ENCODE measurements at regions of chr16 and their contacts with region 1.

Region 1: DNA sequence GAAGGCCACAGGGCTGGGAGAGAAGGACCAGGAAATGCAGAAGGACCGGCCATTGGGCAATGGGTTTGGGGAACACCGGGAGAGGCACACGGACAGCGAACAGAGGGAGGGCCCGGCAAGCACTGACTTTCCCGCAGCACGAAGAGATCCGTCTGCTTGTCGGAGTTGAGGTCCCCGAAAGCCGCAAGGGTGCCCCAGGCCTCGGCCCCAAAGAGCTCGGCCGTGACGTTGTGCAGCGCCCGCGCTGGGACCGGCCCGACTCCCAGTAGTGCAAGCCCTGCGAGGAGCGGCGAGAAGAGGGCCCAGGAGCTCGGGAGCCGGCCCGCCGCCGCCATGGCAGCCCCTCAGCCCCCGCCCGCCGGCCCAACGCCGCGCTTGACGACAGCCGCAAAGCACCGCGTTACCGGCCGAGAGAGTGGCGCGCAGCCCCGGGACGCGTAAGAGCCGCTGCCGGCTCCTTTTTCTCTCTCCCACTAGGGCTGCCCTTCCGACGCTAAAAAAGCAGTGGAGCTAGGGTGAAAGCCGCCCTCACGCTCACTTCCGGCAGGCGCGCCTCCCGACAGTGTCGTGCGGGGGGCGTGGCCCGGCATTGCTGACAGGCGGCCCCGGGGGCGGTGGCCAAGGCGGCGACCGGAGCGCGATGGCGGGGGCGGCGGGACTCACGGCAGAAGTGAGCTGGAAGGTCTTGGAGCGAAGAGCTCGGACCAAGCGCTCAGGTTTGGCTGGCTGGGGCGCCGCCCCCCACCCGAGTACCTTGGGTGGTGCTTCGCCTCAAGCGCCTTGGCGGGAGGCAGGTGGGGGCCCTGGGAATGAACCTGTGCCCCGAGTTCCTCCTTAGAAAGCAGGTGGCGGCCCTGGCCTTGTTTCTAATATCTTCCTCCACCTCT is at the starts of genes ITFG1 and PHKB:
- DNase-seq: peak; percentile 89 to 98 (median 94)
- ATAC-seq: peak; percentile 96
- H3K4me3 ChIP-seq: peak within 1 kb of the TSS; percentile 79
- H3K4me3 Mint-ChIP-seq: peak within 1 kb of the TSS; percentile 89
- H3K27ac ChIP-seq: peak within 1 kb of the TSS; percentile 87 to 93
- H3K27ac Mint-ChIP-seq: peak within 1 kb of the TSS; percentile 87
- H3K4me1 ChIP-seq: peaks cover 26% of the 10 kb centered on the region
- H3K4me1 Mint-ChIP-seq: peaks cover 70% of the 10 kb centered on the region
- H3K27me3 ChIP-seq: no peaks in the 10 kb centered on the region
- H3K27me3 Mint-ChIP-seq: no peaks in the 10 kb centered on the region
- CTCF ChIP-seq: no peak
- total RNA-seq, gene ITFG1: 18.0 to 18.5 TPM
- total RNA-seq, gene PHKB: 28.8 to 31.3 TPM

Region 2: DNA sequence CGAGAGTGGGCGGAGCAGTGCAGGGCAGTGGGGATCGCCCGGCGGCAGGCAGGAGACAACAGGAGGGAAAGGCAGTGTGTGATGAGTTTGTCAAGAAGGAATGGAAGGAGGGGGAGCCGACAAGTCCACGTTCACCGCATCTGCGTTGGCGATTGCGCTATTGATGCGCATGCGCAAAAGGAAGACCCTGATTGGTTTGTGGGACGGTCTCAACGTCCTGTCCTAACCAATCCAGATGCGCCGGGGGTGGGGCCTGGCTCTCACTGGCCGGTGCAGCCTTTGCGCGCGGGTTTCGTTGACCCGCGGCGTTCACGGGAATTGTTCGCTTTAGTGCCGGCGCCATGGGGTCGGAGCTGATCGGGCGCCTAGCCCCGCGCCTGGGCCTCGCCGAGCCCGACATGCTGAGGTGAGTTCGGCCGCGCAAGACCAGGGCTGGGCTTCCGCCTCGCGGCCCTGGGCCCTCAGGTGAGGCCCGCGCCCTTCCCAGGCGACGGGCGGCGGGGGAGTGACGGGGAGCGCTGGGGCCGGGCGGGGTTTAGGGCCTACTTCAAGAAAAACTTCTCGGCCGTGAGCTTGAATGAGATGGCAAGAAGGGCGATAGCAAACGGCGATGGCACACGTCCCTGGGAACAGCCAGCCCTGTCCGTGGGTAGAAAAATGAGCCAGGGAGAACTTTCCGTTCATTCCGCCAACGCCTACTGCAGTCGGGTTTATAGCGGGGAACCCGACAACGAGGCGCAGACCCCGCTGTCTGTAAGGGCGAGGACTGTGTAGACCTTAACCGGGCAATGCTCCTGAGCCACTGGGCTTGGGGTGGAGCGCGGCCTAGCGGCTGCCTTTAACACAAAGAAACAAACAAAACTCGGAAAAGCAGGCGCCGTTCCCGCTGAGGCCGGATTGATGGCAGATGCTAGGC is 771.3 kb before region 1 on chr16 and contains the start of gene ORC6:
- CTCF ChIA-PET with region 1: no interaction called
- POLR2A ChIA-PET with region 1: no interaction called
- intact Hi-C with region 1: loop called (anchors 5 to 10 kb)
- DNase-seq: peak; percentile 92 to 97 (median 96)
- ATAC-seq: peak; percentile 72
- H3K4me3 ChIP-seq: peak within 1 kb of the TSS; percentile 94
- H3K4me3 Mint-ChIP-seq: no peak within 1 kb of the TSS
- H3K27ac ChIP-seq: peak within 1 kb of the TSS; percentile 91 to 98
- H3K27ac Mint-ChIP-seq: no peak within 1 kb of the TSS
- H3K4me1 ChIP-seq: peaks cover 23% of the 10 kb centered on the region
- H3K4me1 Mint-ChIP-seq: peaks cover 33% of the 10 kb centered on the region
- H3K27me3 ChIP-seq: no peaks in the 10 kb centered on the region
- H3K27me3 Mint-ChIP-seq: no peaks in the 10 kb centered on the region
- CTCF ChIP-seq: no peak
- total RNA-seq, gene ORC6: 3.7 to 3.8 TPM

Region 3: DNA sequence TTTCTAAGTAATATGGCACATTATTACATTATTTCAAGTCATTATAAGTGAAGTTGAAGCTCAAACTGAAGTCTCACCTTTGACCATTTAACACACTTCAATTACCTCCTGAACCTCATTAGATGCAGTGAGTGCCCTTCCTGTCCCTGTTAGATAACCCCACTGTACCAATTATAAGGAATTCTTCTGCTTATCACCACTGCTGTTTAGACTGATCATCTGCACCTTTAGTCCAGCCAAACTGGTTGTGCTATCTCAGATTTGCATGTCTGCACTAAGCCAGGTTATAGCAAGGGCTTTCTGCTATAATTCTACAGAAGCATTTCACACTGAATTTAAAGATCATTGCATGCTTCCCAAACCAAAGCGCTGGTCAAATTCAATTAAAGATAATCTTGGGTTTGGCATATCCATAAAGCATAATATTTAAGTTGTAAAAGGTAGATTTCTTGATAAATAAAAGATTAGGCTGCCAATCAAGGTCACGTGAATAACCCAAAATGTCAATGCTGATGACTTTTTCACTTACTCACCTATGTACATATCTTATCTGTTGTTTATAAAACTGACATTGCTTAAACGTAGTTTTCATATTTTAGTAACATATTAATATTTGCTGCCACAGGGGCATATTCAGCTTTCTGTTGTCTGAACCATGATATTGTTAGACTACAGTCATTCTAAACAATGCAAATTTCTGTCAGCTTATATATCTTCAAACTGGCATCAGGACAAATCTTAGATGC is 12.0 kb before region 1 on chr16:
- CTCF ChIA-PET with region 1: interaction called, 3 read pairs
- POLR2A ChIA-PET with region 1: interaction called, 11 read pairs
- intact Hi-C with region 1: no loop called
- DNase-seq: no peak
- ATAC-seq: no peak
- H3K4me3 ChIP-seq: no peak overlapping the region
- H3K4me3 Mint-ChIP-seq: no peak overlapping the region
- H3K27ac ChIP-seq: no peak overlapping the region
- H3K27ac Mint-ChIP-seq: no peak overlapping the region
- H3K4me1 ChIP-seq: no peaks in the 10 kb centered on the region
- H3K4me1 Mint-ChIP-seq: peaks cover 46% of the 10 kb centered on the region
- H3K27me3 ChIP-seq: no peaks in the 10 kb centered on the region
- H3K27me3 Mint-ChIP-seq: no peaks in the 10 kb centered on the region
- CTCF ChIP-seq: no peak

Region 4: DNA sequence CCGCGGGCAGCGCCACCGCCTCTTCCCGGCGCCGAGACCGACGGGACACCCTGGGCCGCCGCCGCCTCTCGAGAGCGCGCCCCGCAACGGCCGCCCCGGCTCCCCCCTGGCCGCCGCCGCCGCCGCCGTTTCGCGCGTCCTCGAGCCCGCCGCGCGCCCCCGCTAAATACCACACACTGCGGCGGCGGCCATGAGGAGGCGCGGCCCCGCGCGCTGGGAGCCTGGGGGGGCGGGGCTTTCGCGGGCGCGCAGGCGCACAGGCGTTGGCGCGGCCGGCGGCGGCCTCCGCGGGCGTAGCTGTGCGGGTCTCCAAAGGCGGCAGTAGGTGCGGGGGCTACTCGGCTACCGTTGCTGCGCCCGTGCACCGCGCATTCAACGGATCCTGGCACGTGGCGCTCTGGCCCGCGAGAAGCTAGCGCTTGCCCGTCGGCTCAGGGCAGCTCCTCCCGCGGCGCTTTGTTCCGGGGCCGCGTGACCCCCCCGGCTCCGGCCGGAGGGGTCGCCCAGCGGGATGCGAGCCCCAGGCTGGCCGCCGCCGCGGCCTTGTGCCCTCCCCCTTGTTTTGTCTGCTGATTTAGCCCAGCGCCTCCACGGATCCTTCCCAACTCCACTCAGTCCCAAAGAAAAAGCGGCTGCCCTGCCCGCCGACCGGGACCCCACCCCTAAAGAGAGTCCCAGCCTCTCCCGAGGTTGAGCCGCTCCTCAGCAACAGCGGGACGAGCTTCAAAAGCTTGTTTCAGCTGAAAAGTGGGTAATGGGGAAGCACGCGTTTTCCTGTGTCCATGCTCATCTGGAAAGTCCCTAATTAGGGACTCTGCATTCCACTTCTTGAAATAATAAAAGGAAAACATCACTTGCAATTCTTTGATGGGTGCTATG is 924.6 kb after region 1 on chr16 and contains the start of gene SIAH1:
- CTCF ChIA-PET with region 1: no interaction called
- POLR2A ChIA-PET with region 1: interaction called, 4 read pairs
- intact Hi-C with region 1: loop called in 1 of 2 experiments (anchors 10 kb)
- DNase-seq: peak; percentile 73 to 96 (median 86)
- ATAC-seq: peak; percentile 80
- H3K4me3 ChIP-seq: peak within 1 kb of the TSS; percentile 81
- H3K4me3 Mint-ChIP-seq: peak within 1 kb of the TSS; percentile 98
- H3K27ac ChIP-seq: peak within 1 kb of the TSS in 1 of 2 donors; percentile 46
- H3K27ac Mint-ChIP-seq: peak within 1 kb of the TSS; percentile 92
- H3K4me1 ChIP-seq: peaks cover 12% of the 10 kb centered on the region
- H3K4me1 Mint-ChIP-seq: peaks cover 27% of the 10 kb centered on the region
- H3K27me3 ChIP-seq: no peaks in the 10 kb centered on the region
- H3K27me3 Mint-ChIP-seq: no peaks in the 10 kb centered on the region
- CTCF ChIP-seq: no peak
- total RNA-seq, gene SIAH1: 40.9 to 43.0 TPM

Measured in CD4-positive, alpha-beta T cell (primary cell).